ENCODE measurements at regions of chr20 and their contacts with region 1.

Region 1: GRCh38 chr20:62557445-62557844 is 81.7 kb upstream of the GATA5 start:
- DNase-seq: peak in 1 of 2 donors; percentile 86
- ATAC-seq: peak in 1 of 2 donors; percentile 13
- H3K4me3 ChIP-seq: no peak overlapping the region
- H3K27ac ChIP-seq: peak overlapping the region; percentile 91 to 100 (median 98)
- H3K4me1 ChIP-seq: peaks cover 74 to 96% of the 10 kb centered on the region in 2 donors
- H3K27me3 ChIP-seq: no peaks in the 10 kb centered on the region
- CTCF ChIP-seq: no peak
- POLR2A ChIP-seq: no peak

Region 2: DNA sequence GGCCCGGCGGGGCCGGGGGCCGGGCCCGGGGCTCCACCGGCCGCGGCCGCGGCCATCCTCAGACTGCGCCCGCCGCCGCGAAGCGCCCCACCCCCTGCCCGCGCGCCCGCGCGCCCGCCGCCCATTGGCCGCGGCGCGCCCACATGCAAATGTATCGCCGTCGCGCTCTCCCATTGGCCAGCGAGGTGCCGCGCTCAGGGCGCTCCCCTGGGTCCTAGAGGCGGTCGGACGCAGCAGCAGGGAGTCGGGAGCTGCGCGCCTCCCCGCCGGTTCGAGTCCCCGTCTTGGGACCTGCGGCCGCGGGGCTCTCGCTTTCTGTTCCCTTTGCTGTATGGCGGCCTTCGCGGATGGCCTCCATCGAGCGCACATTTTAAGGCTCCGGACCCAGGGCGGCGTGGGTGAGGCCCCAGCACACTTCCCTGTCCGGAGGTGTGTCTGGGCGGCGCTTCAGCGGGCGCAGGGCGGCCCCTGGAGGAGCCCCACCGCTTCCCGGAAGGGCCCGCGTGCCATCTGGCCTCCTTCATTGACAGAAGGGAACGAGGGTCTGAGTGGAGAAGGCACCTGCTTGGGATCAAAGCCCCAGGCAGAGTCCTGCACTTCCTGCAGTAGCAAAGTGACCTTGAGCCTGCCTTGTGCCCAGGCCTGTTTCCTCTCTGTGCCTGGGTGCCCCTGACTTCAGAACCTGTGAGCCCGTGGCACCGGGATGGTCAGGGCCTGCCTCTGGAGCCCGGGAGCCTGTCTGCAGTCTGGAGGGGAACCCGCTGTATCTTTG is 150.0 kb before region 1 on chr20 and contains the start of gene CABLES2:
- in situ Hi-C with region 1: no loop called
- intact Hi-C with region 1: no loop called
- DNase-seq: peak; percentile 87 to 94
- ATAC-seq: peak; percentile 94 to 95
- H3K4me3 ChIP-seq: peak within 1 kb of the TSS; percentile 53 to 63 (median 62)
- H3K27ac ChIP-seq: peak within 1 kb of the TSS in 3 of 4 donors; percentile 3 to 62 (median 51)
- H3K4me1 ChIP-seq: peaks cover 20 to 25% of the 10 kb centered on the region in 2 donors
- H3K27me3 ChIP-seq: no peaks in the 10 kb centered on the region
- CTCF ChIP-seq: peak in 3 of 5 experiments; percentile 14 to 52 (median 44)
- POLR2A ChIP-seq: peak; percentile 15 to 52
- total RNA-seq, gene CABLES2: 3.6 to 9.3 (median 4.2) TPM

Region 3: GRCh38 chr20:62511915-62512610 is 45.4 kb before region 1 on chr20:
- in situ Hi-C with region 1: no loop called
- intact Hi-C with region 1: loop called (anchors 2 kb)
- DNase-seq: peak; percentile 72 to 90
- ATAC-seq: peak; percentile 73 to 78
- H3K4me3 ChIP-seq: peak overlapping the region; percentile 3 to 46 (median 33)
- H3K27ac ChIP-seq: peak overlapping the region; percentile 90 to 99 (median 99)
- H3K4me1 ChIP-seq: peaks cover 35 to 38% of the 10 kb centered on the region in 2 donors
- H3K27me3 ChIP-seq: no peaks in the 10 kb centered on the region
- CTCF ChIP-seq: no peak
- POLR2A ChIP-seq: peak; percentile 62 to 66

Region 4: DNA sequence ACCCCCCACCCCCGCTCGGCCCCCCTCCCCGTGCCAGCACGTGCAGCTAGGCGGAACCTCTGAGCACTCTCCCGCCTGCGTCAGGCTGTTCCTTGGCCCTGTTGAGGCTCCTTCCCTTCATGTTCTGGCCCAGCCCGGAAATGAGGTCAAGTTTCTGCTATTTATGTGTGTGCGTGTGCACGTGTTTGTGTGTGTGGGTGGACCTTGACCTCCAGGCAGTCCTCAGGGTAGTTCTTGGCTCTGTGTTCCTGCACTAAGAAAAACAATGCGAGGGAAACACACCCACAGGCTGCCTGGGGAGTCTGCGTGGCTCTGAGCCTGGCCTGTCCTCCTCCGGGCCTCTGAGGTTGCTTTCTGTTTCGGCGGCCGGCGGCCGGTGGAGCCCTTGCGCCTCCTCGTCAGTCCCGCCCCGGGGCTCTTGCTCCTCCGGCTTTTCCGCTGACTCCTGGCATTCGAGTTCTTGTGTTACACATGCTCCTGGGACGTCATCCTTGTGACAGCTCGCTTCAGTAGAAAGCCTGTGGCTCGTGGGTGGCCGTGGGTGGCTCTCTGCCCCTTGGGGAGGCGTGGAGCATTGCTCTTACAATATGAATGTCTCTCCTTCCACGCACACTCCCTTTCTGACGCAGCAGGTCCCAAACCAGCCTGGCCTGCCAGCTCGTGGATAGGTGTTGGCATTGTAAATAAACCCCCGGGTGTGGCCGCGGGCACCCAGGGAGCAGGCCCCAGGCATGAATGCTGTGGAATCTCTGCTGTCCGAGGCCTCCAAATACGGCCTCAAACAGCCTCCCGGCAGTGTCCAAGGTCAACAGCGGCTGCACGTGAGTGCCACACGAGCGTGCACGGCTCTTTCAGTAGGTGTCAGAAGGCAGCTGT is 94.8 kb after region 1 on chr20:
- in situ Hi-C with region 1: no loop called
- intact Hi-C with region 1: loop called (anchors 5 kb)
- DNase-seq: peak; percentile 91 to 95
- ATAC-seq: peak; percentile 75 to 77
- H3K4me3 ChIP-seq: peak overlapping the region; percentile 32 to 53 (median 46)
- H3K27ac ChIP-seq: peak overlapping the region; percentile 87 to 95 (median 94)
- H3K4me1 ChIP-seq: peaks cover 30 to 42% of the 10 kb centered on the region in 2 donors
- H3K27me3 ChIP-seq: no peaks in the 10 kb centered on the region
- CTCF ChIP-seq: peak in 2 of 5 experiments; percentile 30 to 47
- POLR2A ChIP-seq: peak; percentile 76 to 86